Dorsolateral prefrontal cortex (tissue), 120 donors: ENCODE measurements at regions of chr5 and their contacts with region 1.

Region 1: GRCh38 chr5:109409844-109410388 is at the start of gene PJA2:
- DNase-seq: peak; percentile 89 to 99 (median 97)
- H3K4me3 ChIP-seq: peak within 1 kb of the TSS; percentile 66 to 98 (median 86)
- H3K27ac ChIP-seq: peak within 1 kb of the TSS; percentile 84 to 100 (median 99)
- H3K27me3 ChIP-seq: no peaks in the 10 kb centered on the region
- CTCF ChIP-seq: peak in 42 of 56 donors; percentile 8 to 58 (median 38)
- total RNA-seq, gene PJA2: 116 to 427 (median 298) TPM

Region 2: GRCh38 chr5:109347252-109347888 is 62.5 kb before region 1 on chr5:
- intact Hi-C with region 1: loop called in 1 of 2 experiments (anchors 10 kb)
- DNase-seq: peak; percentile 26 to 80 (median 69)
- H3K4me3 ChIP-seq: no peak overlapping the region
- H3K27ac ChIP-seq: peak overlapping the region in 34 of 59 donors; percentile 0 to 73 (median 30)
- H3K27me3 ChIP-seq: no peaks in the 10 kb centered on the region
- CTCF ChIP-seq: peak in 4 of 56 donors; percentile 7 to 23 (median 11)

Region 3: GRCh38 chr5:109364977-109365376 is 44.9 kb before region 1 on chr5:
- intact Hi-C with region 1: no loop called
- DNase-seq: no peak
- H3K4me3 ChIP-seq: no peak overlapping the region
- H3K27ac ChIP-seq: peak overlapping the region in 1 of 59 donors; percentile 12
- H3K27me3 ChIP-seq: no peaks in the 10 kb centered on the region
- CTCF ChIP-seq: no peak